Activated naive CD4-positive, alpha-beta T cell treated with anti-CD3 and anti-CD28 coated beads for 36 hours (primary cell): ENCODE measurements at regions of chr15 and their contacts with region 1.

Region 1: DNA sequence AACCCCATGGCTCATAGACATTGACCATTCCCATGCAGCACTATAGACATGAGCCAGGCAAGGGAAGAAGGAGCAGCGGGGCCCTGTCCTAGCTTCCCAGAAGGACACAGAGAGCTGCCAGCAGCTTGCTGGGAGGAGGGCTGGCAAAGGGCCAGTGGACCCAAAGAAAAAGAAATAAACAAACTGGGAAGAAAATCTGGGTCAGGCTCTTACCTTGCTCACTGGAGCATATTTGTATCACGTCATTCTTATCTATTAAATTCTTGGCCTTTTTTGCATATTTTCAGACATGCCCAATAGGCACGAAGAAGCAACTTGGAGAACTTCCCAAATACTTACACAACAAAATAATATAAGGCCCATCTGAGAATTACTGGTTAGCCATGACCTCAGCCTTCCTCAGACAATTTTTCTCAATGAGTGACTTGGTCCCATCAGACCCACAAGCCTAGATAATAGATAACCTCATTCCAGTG is 28.4 kb downstream of the RASGRP1 start:
- DNase-seq: no peak
- H3K4me3 Mint-ChIP-seq: no peak overlapping the region
- H3K27ac Mint-ChIP-seq: peak overlapping the region; percentile 26
- H3K4me1 Mint-ChIP-seq: peaks cover 96% of the 10 kb centered on the region
- H3K27me3 Mint-ChIP-seq: no peaks in the 10 kb centered on the region

Region 2: GRCh38 chr15:37900326-37901221 is 635.7 kb before region 1 on chr15:
- CTCF ChIA-PET with region 1: no interaction called
- intact Hi-C with region 1: no loop called
- DNase-seq: no peak
- H3K4me3 Mint-ChIP-seq: no peak overlapping the region
- H3K27ac Mint-ChIP-seq: no peak overlapping the region
- H3K4me1 Mint-ChIP-seq: no peaks in the 10 kb centered on the region
- H3K27me3 Mint-ChIP-seq: peaks cover 8% of the 10 kb centered on the region

Region 3: DNA sequence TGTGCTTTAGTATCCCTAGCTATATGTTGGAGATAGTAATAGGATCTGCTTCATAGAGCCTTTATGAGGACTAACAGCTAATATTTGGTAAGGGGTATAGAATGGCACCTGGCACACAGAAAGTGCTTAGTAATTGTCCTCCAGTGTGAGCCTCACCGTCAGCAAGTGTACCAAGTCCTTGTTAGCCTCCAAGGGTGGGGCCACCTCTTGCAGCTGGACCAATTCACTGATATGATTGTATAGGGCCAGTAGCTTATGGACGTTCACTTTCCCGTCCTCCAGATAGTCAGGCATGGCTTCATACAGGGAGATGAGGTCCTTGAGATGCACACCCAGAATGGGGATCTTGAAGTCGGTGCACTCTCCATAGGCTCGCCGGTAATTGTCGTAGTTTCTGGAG is 28.7 kb before region 1 on chr15:
- CTCF ChIA-PET with region 1: no interaction called
- intact Hi-C with region 1: no loop called
- DNase-seq: no peak
- H3K4me3 Mint-ChIP-seq: no peak overlapping the region
- H3K27ac Mint-ChIP-seq: peak overlapping the region; percentile 39
- H3K4me1 Mint-ChIP-seq: peaks cover 24% of the 10 kb centered on the region
- H3K27me3 Mint-ChIP-seq: no peaks in the 10 kb centered on the region

Region 4: DNA sequence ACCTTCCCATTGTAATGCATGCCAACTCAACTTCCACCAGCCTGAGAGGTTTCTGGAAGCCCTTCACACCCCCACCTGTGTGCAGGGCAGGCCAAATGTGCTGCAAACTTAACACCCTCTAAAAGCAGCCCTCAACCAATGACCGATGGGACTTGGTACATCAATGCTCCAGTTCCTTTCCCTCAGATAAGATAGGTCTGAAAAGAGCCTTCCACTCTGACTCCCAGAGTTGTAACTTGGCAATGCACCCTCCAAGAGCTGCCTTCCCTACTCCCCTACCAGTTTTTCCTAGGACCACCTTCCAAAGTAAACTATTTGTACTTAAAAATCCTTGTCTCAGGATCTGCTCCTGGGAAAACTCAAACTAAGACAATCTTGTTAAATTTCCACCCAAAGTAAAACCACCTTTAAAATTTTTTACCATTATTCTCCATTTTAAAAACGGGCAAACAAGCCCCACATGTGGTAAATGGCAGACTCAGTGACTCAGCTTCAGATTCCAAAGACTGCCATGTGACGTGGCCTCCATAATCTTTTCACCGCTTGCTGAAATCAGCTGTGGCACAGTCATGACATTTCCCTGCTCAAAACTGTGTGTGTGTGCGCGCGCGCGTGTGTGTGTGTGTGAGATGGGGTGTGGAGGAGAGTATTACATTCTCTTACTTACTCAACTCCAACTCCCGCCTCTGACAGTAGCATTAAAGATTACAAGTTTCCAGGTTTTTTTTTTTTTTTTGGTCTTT is 11.2 kb after region 1 on chr15:
- CTCF ChIA-PET with region 1: interaction called, 5 read pairs
- intact Hi-C with region 1: loop called (anchors 1 kb)
- DNase-seq: peak; percentile 68
- H3K4me3 Mint-ChIP-seq: no peak overlapping the region
- H3K27ac Mint-ChIP-seq: peak overlapping the region; percentile 75
- H3K4me1 Mint-ChIP-seq: peaks cover 86% of the 10 kb centered on the region
- H3K27me3 Mint-ChIP-seq: no peaks in the 10 kb centered on the region

Region 5: GRCh38 chr15:38678246-38678645 is 142.0 kb after region 1 on chr15:
- CTCF ChIA-PET with region 1: no interaction called
- intact Hi-C with region 1: no loop called
- DNase-seq: no peak
- H3K4me3 Mint-ChIP-seq: no peak overlapping the region
- H3K27ac Mint-ChIP-seq: no peak overlapping the region
- H3K4me1 Mint-ChIP-seq: peaks cover 31% of the 10 kb centered on the region
- H3K27me3 Mint-ChIP-seq: no peaks in the 10 kb centered on the region

Region 6: GRCh38 chr15:38961931-38962330 is 425.7 kb after region 1 on chr15:
- CTCF ChIA-PET with region 1: no interaction called
- intact Hi-C with region 1: no loop called
- DNase-seq: no peak
- H3K4me3 Mint-ChIP-seq: no peak overlapping the region
- H3K27ac Mint-ChIP-seq: no peak overlapping the region
- H3K4me1 Mint-ChIP-seq: no peaks in the 10 kb centered on the region
- H3K27me3 Mint-ChIP-seq: peaks cover 9% of the 10 kb centered on the region